ENCODE measurements at regions of chr12 and their contacts with region 1.

Region 1: DNA sequence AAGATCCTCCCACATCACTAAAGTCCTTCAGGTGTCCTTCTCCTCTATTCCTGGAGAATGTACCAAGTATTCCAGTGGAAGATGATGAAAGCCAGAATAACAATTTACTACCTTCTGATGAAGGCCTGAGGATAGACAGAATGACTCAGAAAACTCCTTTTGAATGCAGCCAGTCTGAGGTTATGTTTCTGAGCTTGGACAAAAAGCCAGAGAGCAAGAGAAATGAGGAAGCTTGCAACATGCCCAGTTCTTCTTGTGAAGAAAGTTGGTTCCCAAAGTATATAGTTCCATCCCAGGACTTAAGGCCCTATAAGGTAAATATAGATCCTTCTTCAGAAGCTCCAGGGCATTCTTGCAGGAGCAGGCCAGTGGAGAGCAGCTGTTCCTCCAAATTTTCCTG is 54.6 kb upstream of the HELB start:
- DNase-seq: no peak
- CTCF ChIP-seq: no peak

Region 2: GRCh38 chr12:66235626-66236281 is 12.0 kb before region 1 on chr12:
- CTCF ChIA-PET with region 1: interaction called, 12 read pairs
- POLR2A ChIA-PET with region 1: no interaction called
- DNase-seq: no peak
- CTCF ChIP-seq: no peak

Region 3: DNA sequence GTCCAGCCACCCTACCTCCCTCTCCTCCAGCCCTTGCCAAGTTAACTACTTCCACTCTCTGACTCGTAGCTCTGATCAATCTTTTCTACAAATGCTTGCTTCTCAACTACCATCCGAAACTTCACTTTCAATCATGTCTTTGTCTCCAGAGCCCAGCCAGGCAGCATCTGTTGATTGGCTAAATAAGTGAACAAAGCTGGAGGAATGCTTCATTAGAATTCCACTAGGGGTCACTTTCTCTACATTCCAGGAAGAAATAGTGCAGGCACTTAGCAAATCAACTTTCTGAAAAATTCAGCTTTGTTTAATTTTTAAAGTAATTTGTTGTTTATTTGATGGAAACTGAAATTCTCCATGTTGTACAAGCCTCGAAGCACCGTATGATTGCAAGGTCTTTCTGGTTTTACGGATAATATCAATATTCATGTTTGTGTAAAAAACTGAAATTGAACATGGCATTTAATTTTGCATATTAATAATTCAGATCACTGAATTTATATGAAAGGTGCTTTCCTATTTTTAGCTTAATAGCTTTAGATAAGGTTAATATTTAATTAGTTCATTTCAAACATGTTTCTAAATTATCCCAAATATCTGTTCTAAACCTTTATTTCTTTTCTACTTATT is 22.1 kb after region 1 on chr12:
- CTCF ChIA-PET with region 1: interaction called, 12 read pairs
- POLR2A ChIA-PET with region 1: no interaction called
- DNase-seq: peak; percentile 37
- CTCF ChIP-seq: peak; percentile 37